MCF 10A (cell line): ENCODE measurements at regions of chr1 and their contacts with region 1.

Region 1: DNA sequence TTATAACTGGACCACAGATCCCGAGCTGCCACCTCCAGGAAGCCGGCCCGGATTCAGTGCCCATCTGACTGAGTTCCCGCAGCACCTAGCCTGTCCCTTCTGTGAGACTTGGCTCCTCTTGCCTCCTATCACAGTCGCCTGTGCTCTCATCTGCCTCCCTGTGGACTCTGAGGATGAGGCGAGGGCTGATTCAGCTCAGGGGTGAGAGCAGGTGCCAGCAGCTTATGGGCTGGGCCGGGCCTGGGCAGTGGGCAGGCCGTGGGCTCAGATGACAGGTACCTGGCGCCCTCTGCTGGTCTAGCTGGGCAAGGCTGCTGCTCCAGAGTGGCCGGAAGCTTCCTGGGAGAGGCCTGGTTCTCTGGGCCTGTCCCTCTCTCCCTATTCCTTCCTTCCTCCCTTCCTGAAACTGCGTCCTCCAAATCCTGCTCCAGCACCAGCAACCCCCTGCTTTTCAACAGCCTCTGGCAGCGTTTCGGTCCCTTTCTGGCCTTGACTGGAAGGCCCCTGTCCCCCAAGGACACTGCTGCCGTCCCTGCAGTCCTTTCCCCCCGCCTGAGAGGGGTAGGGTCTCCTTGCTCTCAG is 17.3 kb upstream of the PCSK9 start:
- DNase-seq: peak; percentile 93
- H3K4me3 Mint-ChIP-seq: no peak overlapping the region
- H3K27ac Mint-ChIP-seq: peak overlapping the region; percentile 85
- H3K4me1 Mint-ChIP-seq: peaks cover 27% of the 10 kb centered on the region
- H3K27me3 Mint-ChIP-seq: peaks cover 3% of the 10 kb centered on the region
- CTCF ChIP-seq: peak; percentile 92

Region 2: DNA sequence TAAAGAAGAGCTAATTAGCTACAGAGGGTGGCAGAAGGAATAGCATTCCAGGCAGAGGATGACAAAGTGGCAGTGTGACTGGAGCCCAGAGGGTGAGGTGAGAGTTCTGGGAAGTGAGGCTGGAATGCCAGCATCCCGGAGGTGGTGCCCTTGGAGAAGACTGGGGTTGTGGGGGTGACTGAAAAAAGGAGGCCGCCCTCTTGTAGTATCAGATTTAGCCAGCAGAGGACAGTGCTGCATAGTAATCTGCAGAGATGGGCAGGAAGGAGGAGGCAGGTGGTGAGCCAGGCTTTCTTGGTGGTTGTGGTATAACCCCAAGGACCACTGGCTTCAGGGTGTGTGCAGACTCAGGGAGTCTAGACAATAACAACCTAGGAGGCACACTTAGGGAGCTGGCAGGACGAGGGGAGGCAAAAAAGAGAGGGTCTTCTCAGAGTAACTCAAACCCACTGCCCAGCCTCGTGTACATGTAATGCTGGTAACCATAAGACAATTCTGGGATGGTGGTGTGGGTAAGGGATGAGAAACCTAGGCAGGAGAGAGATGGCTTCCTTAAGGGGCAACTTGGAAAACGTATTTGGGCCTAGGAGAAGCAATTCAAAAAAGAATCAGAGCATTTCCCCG is 350.0 kb before region 1 on chr1:
- CTCF ChIA-PET with region 1: no interaction called
- POLR2A ChIA-PET with region 1: no interaction called
- intact Hi-C with region 1: loop called (anchors 1 kb)
- DNase-seq: peak; percentile 66
- H3K4me3 Mint-ChIP-seq: no peak overlapping the region
- H3K27ac Mint-ChIP-seq: no peak overlapping the region
- H3K4me1 Mint-ChIP-seq: peaks cover 8% of the 10 kb centered on the region
- H3K27me3 Mint-ChIP-seq: peaks cover under 1% of the 10 kb centered on the region
- CTCF ChIP-seq: peak; percentile 92

Region 3: GRCh38 chr1:55007625-55008024 is 14.4 kb before region 1 on chr1:
- CTCF ChIA-PET with region 1: interaction called, 24 read pairs
- POLR2A ChIA-PET with region 1: interaction called, 3 read pairs
- intact Hi-C with region 1: no loop called
- DNase-seq: peak; percentile 10
- H3K4me3 Mint-ChIP-seq: no peak overlapping the region
- H3K27ac Mint-ChIP-seq: no peak overlapping the region
- H3K4me1 Mint-ChIP-seq: peaks cover 6% of the 10 kb centered on the region
- H3K27me3 Mint-ChIP-seq: peaks cover 7% of the 10 kb centered on the region
- CTCF ChIP-seq: no peak

Region 4: DNA sequence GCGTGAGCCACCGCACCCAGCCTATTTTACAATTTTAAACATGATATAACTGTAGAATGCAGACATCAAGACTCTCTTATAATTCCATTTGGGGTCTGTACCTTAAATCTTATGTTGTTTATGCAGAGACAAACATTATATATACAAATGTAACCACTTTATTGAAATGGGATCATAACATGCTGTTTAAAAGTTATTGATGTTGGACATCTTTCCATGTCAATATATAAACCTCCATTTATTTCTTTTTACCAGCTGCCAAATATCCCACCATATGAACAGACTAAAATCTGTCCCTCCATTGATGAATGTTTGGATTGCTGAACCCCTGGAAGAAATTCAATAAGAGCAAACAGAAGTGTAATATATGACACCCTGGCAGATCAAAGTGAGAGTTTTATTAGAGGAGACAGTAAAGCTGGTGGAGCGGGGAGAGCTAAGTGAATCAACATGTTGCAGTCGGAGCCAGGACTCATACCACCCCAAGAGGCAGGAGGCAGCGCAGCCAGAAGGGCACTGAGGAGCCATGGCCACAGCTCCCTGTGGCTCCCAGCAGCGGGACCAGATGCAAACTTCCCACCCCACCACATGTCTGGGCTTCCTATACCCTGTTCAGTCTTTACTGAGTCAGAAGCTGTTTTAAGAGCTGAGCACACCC is 12.5 kb after region 1 on chr1:
- CTCF ChIA-PET with region 1: interaction called, 19 read pairs
- POLR2A ChIA-PET with region 1: no interaction called
- intact Hi-C with region 1: no loop called
- DNase-seq: no peak
- H3K4me3 Mint-ChIP-seq: no peak overlapping the region
- H3K27ac Mint-ChIP-seq: no peak overlapping the region
- H3K4me1 Mint-ChIP-seq: no peaks in the 10 kb centered on the region
- H3K27me3 Mint-ChIP-seq: peaks cover 44% of the 10 kb centered on the region
- CTCF ChIP-seq: no peak